Activated B cell treated with CpG ODN at 0.5 μM for 24 hours (primary cell): ENCODE measurements at regions of chr2 and their contacts with region 1.

Region 1: GRCh38 chr2:37263839-37264238 is 32.4 kb downstream of the NDUFAF7 start:
- DNase-seq: no peak
- ATAC-seq: no peak
- H3K4me3 Mint-ChIP-seq: no peak overlapping the region
- H3K27ac Mint-ChIP-seq: no peak overlapping the region
- H3K4me1 Mint-ChIP-seq: peaks cover 21% of the 10 kb centered on the region
- H3K27me3 Mint-ChIP-seq: no peaks in the 10 kb centered on the region
- CTCF ChIP-seq: no peak

Region 2: GRCh38 chr2:36881816-36882215 is 382.0 kb before region 1 on chr2:
- CTCF ChIA-PET with region 1: no interaction called
- POLR2A ChIA-PET with region 1: no interaction called
- intact Hi-C with region 1: loop called (anchors 5 kb)
- DNase-seq: no peak
- ATAC-seq: no peak
- H3K4me3 Mint-ChIP-seq: no peak overlapping the region
- H3K27ac Mint-ChIP-seq: no peak overlapping the region
- H3K4me1 Mint-ChIP-seq: no peaks in the 10 kb centered on the region
- H3K27me3 Mint-ChIP-seq: no peaks in the 10 kb centered on the region
- CTCF ChIP-seq: no peak